IMR-90 (cell line): ENCODE measurements at regions of chr2 and their contacts with region 1.

Region 1: GRCh38 chr2:29841386-29842004 is 79.9 kb downstream of the ALK start:
- DNase-seq: peak; percentile 22
- ATAC-seq: peak; percentile 91
- H3K4me3 ChIP-seq: no peak overlapping the region
- H3K27ac ChIP-seq: no peak overlapping the region
- H3K4me1 ChIP-seq: no peaks in the 10 kb centered on the region
- H3K27me3 ChIP-seq: peaks cover 2% of the 10 kb centered on the region
- CTCF ChIP-seq: peak; percentile 83
- POLR2A ChIP-seq: no peak
- RAD21 ChIP-seq: peak; percentile 83

Region 2: DNA sequence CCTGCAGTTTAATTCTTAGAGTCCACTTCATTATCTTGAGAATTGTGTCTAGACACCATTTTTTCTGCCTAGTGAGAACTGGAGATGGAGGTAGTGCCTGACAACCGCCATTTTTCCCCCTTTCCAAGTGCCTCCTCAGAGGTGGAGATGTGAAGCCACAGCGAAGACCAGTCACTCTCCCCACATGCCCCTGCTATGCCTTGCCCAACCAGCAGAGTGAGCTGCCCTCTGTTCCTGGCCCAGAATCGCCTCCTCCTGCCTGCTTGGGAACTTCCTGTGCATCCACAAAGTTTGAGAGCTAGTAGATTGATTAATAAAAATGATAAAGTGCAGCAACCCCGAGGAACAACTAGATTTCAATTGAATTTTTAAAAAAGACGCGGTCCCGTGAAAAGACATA is 603.0 kb before region 1 on chr2:
- CTCF ChIA-PET with region 1: no interaction called
- POLR2A ChIA-PET with region 1: no interaction called
- dilution Hi-C with region 1: no loop called
- in situ Hi-C with region 1: no loop called
- intact Hi-C with region 1: loop called (anchors 2 kb)
- DNase-seq: peak; percentile 17
- ATAC-seq: peak; percentile 74
- H3K4me3 ChIP-seq: no peak overlapping the region
- H3K27ac ChIP-seq: no peak overlapping the region
- H3K4me1 ChIP-seq: 0 out of 2 replicates have a peak, but pooled peaks cover 3% of the 10 kb centered on the region
- H3K27me3 ChIP-seq: peaks cover 54% of the 10 kb centered on the region
- CTCF ChIP-seq: peak; percentile 61
- POLR2A ChIP-seq: no peak
- RAD21 ChIP-seq: peak; percentile 64

Region 3: DNA sequence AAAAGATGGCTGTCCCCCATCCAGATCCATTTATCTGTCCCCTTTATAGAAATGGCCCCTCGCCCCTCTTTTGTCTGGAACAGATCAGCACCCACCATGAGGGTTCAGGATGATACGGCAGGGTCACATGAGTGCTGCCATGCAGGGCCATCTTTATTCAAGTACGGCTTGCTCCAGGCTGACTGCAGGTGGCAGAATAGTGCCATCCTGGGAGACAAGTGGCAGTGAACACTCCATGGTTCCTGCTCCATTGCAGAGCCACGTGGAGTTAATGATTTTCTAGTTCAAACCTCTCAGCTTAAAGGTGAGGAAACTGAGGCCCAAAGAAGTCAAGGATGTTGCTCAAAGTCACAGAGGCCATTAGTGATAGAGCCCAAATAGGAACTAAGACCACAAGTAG is 545.6 kb before region 1 on chr2:
- CTCF ChIA-PET with region 1: no interaction called
- POLR2A ChIA-PET with region 1: no interaction called
- dilution Hi-C with region 1: no loop called
- in situ Hi-C with region 1: loop called (anchors 25 kb)
- intact Hi-C with region 1: loop called (anchors 2 kb)
- DNase-seq: peak; percentile 26
- ATAC-seq: peak; percentile 65
- H3K4me3 ChIP-seq: no peak overlapping the region
- H3K27ac ChIP-seq: no peak overlapping the region
- H3K4me1 ChIP-seq: no peaks in the 10 kb centered on the region
- H3K27me3 ChIP-seq: peaks cover 5% of the 10 kb centered on the region; the same call in 1 of the 2 replicates
- CTCF ChIP-seq: peak; percentile 41
- POLR2A ChIP-seq: no peak
- RAD21 ChIP-seq: peak; percentile 60

Region 4: GRCh38 chr2:29309090-29310029 is 532.1 kb before region 1 on chr2:
- CTCF ChIA-PET with region 1: interaction called, 5 read pairs
- POLR2A ChIA-PET with region 1: no interaction called
- dilution Hi-C with region 1: no loop called
- in situ Hi-C with region 1: loop called (anchors 25 kb)
- intact Hi-C with region 1: loop called (anchors 1 kb)
- DNase-seq: peak; percentile 66
- ATAC-seq: peak; percentile 95
- H3K4me3 ChIP-seq: no peak overlapping the region
- H3K27ac ChIP-seq: no peak overlapping the region
- H3K4me1 ChIP-seq: no peaks in the 10 kb centered on the region
- H3K27me3 ChIP-seq: peaks cover 23% of the 10 kb centered on the region
- CTCF ChIP-seq: peak; percentile 71
- POLR2A ChIP-seq: no peak
- RAD21 ChIP-seq: peak; percentile 71

Region 5: GRCh38 chr2:30072250-30072842 is 230.9 kb after region 1 on chr2:
- CTCF ChIA-PET with region 1: no interaction called
- POLR2A ChIA-PET with region 1: no interaction called
- dilution Hi-C with region 1: no loop called
- in situ Hi-C with region 1: no loop called
- intact Hi-C with region 1: loop called (anchors 1 kb)
- DNase-seq: peak; percentile 72
- ATAC-seq: peak; percentile 96
- H3K4me3 ChIP-seq: no peak overlapping the region
- H3K27ac ChIP-seq: no peak overlapping the region
- H3K4me1 ChIP-seq: no peaks in the 10 kb centered on the region
- H3K27me3 ChIP-seq: peaks cover 21% of the 10 kb centered on the region
- CTCF ChIP-seq: peak; percentile 78
- POLR2A ChIP-seq: no peak
- RAD21 ChIP-seq: peak; percentile 77